Panc1 (cell line): ENCODE measurements at regions of chr13 and their contacts with region 1.

Region 1: GRCh38 chr13:46624353-46624752 is 71.4 kb downstream of the LRCH1 start:
- DNase-seq: no peak
- ATAC-seq: no peak
- H3K4me3 ChIP-seq: no peak overlapping the region
- H3K27ac ChIP-seq: no peak overlapping the region
- H3K4me1 ChIP-seq: no peaks in the 10 kb centered on the region; the same call in 1 of the 2 replicates
- H3K27me3 ChIP-seq: no peaks in the 10 kb centered on the region
- CTCF ChIP-seq: no peak

Region 2: GRCh38 chr13:46593398-46593797 is 31.0 kb before region 1 on chr13:
- CTCF ChIA-PET with region 1: interaction called, 13 read pairs
- POLR2A ChIA-PET with region 1: no interaction called
- in situ Hi-C with region 1: no loop called
- intact Hi-C with region 1: no loop called
- DNase-seq: no peak
- ATAC-seq: no peak
- H3K4me3 ChIP-seq: no peak overlapping the region
- H3K27ac ChIP-seq: no peak overlapping the region
- H3K4me1 ChIP-seq: no peaks in the 10 kb centered on the region
- H3K27me3 ChIP-seq: no peaks in the 10 kb centered on the region
- CTCF ChIP-seq: no peak